Activated B cell treated with CpG ODN at 0.5 μM for 24 hours (primary cell): ENCODE measurements at regions of chr11 and their contacts with region 1.

Region 1: GRCh38 chr11:58579192-58580129 is 598 bp downstream of the ZFP91 start:
- DNase-seq: peak; percentile 87
- ATAC-seq: peak; percentile 33
- H3K4me3 Mint-ChIP-seq: peak overlapping the region; percentile 96
- H3K27ac Mint-ChIP-seq: peak overlapping the region; percentile 100
- H3K4me1 Mint-ChIP-seq: peaks cover 79% of the 10 kb centered on the region
- H3K27me3 Mint-ChIP-seq: no peaks in the 10 kb centered on the region
- CTCF ChIP-seq: no peak

Region 2: DNA sequence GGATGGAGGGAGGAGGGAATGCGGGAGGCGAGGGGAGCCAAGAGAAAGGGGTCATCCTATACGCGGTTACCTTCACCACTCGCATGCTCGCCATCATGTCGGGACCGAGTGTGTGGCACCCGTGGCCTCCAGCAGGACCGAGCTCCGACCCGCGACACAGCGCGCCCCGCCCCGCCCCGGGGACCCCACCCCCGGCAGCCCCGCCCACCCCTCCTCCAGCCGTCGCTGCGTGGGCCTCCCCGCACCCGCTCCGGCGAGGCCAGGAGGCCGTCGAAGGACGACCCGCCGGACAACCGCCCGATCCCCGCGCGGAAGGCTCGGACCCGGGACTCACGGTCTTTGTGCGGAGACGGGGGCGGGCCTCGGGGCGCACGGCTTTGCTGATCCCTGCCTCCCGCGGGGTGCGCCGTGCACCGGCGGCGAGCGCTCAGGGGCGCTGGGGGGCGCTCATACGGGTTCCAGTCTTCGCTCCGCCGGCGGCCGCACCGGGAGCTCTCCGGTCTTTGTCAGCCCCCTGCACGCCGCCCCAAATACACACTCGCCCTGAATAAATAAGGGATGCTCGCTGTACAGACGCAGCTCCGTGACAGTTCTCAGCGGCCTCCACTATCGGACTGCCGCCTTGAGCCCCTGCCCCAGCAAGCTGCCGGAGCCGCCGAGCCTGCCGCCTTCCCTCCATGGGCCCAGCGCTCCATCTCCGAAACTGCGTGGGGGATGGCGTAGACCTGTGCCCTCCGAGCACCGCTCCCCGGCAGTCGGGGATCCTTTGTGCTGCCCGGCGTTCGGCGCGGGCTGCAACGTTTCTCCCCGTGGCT is 1011.7 kb before region 1 on chr11 and contains the start of gene UBE2L6:
- CTCF ChIA-PET with region 1: no interaction called
- POLR2A ChIA-PET with region 1: no interaction called
- intact Hi-C with region 1: loop called (anchors 5 kb)
- DNase-seq: peak; percentile 80
- ATAC-seq: peak; percentile 70
- H3K4me3 Mint-ChIP-seq: peak within 1 kb of the TSS; percentile 99
- H3K27ac Mint-ChIP-seq: peak within 1 kb of the TSS; percentile 97
- H3K4me1 Mint-ChIP-seq: peaks cover 40% of the 10 kb centered on the region
- H3K27me3 Mint-ChIP-seq: no peaks in the 10 kb centered on the region
- CTCF ChIP-seq: peak; percentile 41
- total RNA-seq, gene UBE2L6: 63.4 and 69.2 TPM in 2 replicates

Region 3: DNA sequence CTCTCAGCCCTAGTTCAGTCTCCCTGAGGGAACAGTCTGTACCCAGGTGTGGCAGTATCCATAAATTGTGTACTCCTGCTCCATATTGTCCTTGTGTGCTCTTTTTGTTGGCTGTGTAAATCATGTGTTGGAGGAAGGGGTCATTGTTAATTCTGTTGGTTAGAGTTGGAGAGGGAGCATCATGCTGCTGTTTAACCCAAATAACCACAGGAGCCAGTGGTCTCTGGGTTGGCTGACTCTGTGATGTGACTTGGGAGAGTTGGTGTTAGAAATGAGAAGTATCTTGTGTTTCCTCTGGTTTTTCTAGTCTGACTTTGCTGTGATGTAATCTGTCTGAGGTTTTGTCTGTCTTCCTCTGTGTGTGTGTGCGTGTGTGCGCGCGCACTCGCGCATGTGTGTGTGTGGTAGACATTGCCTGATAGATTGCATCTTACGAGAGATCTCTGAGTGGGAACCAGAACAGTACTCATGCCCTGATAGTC is 787.4 kb before region 1 on chr11:
- CTCF ChIA-PET with region 1: no interaction called
- POLR2A ChIA-PET with region 1: no interaction called
- intact Hi-C with region 1: loop called (anchors 5 kb)
- DNase-seq: peak; percentile 71
- ATAC-seq: peak; percentile 89
- H3K4me3 Mint-ChIP-seq: peak overlapping the region; percentile 75
- H3K27ac Mint-ChIP-seq: peak overlapping the region; percentile 90
- H3K4me1 Mint-ChIP-seq: peaks cover 73% of the 10 kb centered on the region
- H3K27me3 Mint-ChIP-seq: no peaks in the 10 kb centered on the region
- CTCF ChIP-seq: no peak

Region 4: GRCh38 chr11:58358969-58359368 is 220.5 kb before region 1 on chr11 and contains the start of gene OR5B17:
- CTCF ChIA-PET with region 1: no interaction called
- POLR2A ChIA-PET with region 1: no interaction called
- intact Hi-C with region 1: no loop called
- DNase-seq: no peak
- ATAC-seq: no peak
- H3K4me3 Mint-ChIP-seq: no peak within 1 kb of the TSS
- H3K27ac Mint-ChIP-seq: no peak within 1 kb of the TSS
- H3K4me1 Mint-ChIP-seq: no peaks in the 10 kb centered on the region
- H3K27me3 Mint-ChIP-seq: peaks cover 12% of the 10 kb centered on the region
- CTCF ChIP-seq: no peak
- total RNA-seq, gene OR5B17: not detected in 2 replicates

Region 5: DNA sequence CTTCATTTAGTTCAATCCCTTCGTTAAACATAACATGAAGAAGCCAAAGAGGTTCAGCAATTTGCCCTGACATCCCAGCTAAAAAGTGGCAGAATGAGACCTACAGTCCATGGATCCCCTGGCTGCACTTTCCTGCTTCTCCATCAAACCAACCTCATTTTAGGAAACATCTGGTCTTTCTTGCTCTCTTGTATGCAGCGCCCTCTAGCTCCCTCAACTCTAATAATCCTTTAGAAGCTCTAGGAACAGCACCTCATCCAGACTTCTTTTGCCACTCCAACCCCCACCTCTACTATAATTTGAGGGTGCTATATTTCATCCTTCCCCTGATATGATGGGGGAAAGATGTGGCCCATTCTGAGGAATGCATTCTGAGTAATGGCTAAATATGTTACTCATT is 50.4 kb after region 1 on chr11:
- CTCF ChIA-PET with region 1: interaction called, 3 read pairs
- POLR2A ChIA-PET with region 1: interaction called, 10 read pairs
- intact Hi-C with region 1: no loop called
- DNase-seq: no peak
- ATAC-seq: no peak
- H3K4me3 Mint-ChIP-seq: no peak overlapping the region
- H3K27ac Mint-ChIP-seq: no peak overlapping the region
- H3K4me1 Mint-ChIP-seq: peaks cover 22% of the 10 kb centered on the region
- H3K27me3 Mint-ChIP-seq: no peaks in the 10 kb centered on the region
- CTCF ChIP-seq: no peak

Region 6: DNA sequence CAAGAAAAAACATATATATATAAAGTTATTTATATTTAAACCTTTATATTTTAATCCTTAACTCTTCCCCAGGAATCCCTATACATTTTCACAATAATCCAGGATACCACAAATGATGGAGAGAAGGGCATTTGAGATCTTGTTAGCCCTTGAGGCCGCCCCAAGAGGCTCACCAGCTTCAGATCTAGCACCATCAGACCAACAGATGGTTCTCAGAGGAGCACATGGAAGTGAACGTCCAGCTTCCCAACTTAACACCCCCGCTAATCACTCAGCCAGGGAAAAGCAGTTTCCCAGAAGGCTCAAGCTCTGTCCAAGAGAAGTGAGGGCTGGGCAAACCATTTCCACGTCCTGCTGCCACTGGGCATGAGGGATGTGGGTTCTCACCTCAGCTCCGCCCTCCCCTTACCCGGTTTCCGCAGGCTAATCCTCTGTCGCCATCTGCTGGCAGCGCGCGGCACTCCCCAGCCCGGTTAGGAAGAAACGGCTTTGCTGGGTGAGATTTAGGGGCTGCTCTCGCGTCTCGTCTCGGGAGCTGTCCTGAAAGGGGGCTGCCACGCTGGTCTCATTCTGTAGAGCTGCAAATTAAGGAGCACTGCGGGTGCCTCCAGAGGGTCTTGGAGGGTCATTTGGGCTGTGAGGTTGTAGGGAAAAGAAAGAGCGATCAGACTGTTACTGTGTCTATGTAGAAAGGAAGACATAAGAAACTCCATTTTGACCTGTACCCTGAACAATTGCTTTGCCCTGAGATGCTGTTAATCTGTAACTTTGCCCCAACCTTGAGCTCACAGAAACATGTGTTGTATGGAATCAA is 556.4 kb after region 1 on chr11:
- CTCF ChIA-PET with region 1: interaction called, 12 read pairs
- POLR2A ChIA-PET with region 1: interaction called, 7 read pairs
- intact Hi-C with region 1: no loop called
- DNase-seq: peak; percentile 85
- ATAC-seq: peak; percentile 98
- H3K4me3 Mint-ChIP-seq: peak overlapping the region; percentile 69
- H3K27ac Mint-ChIP-seq: peak overlapping the region; percentile 88
- H3K4me1 Mint-ChIP-seq: peaks cover 25% of the 10 kb centered on the region
- H3K27me3 Mint-ChIP-seq: no peaks in the 10 kb centered on the region
- CTCF ChIP-seq: peak; percentile 91

Region 7: DNA sequence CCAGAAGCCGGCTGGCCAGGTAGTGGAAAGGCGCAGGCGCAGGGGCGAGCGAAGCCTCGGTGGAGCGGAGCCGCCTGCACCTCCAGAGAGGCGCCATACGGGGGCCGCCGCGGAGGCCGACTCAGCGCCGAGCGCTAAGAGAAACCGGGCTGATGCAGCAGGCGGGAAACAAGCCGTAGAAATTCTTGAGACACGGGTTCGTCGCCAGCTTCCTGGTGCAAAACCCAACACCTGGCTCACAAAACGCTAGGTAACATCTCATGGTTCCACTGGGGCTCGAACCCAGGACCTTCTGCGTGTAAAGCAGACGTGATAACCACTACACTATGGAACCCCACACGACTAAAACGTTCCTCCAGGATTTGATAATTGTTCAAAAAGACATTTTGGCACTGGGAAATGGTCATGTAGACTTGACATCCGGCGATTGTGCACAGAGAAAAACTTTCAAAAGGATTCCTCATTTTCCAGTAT is 970.9 kb after region 1 on chr11:
- CTCF ChIA-PET with region 1: no interaction called
- POLR2A ChIA-PET with region 1: no interaction called
- intact Hi-C with region 1: loop called (anchors 5 kb)
- DNase-seq: peak; percentile 75
- ATAC-seq: peak; percentile 91
- H3K4me3 Mint-ChIP-seq: peak overlapping the region; percentile 87
- H3K27ac Mint-ChIP-seq: peak overlapping the region; percentile 94
- H3K4me1 Mint-ChIP-seq: peaks cover 31% of the 10 kb centered on the region
- H3K27me3 Mint-ChIP-seq: no peaks in the 10 kb centered on the region
- CTCF ChIP-seq: peak; percentile 43